HepG2 (cell line): ENCODE measurements at regions of chr7 and their contacts with region 1.

Region 1: DNA sequence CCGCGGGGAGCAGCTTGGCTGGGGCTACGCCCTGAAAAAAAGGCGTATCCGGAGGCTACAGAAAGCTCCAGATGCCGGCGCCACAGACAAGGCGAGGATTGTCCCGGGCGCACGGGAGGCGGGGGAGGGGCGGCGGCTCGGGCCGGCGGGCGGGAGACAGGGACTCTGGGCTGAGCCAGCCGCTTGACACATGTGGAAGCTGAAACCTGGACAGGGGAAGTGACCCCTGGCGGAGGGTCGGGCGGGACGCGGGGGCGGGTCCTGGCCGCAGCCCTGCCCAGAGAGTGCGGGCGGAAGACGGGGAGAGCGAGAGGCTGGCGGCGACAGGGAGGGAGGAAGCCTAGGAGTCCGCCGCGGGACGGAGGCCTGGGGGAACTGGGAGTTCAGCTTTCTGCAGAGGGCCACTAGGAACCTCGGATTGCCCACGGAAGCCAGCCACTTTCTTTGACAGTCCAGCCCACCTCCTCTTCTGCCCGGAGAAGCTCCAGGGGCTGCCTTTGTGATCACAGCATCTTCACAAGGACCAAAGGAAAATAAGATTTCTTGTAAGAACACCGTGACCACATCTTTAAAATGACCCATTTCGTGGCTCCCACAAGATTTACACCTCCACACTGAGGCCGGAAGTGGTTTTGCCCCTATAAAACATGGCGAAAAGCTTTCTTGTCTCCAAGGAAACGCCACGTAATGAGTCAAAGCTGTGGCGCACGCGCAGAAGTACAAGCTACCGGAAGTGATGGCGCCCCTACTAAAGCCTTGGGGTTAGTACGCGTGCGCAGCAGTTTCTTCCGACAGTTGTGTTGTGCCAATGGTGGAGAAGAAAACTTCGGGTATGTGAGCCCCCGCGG is at the starts of genes PLOD3 and ZNHIT1:
- DNase-seq: peak; percentile 98
- ATAC-seq: peak; percentile 93
- H3K4me3 ChIP-seq: peak within 1 kb of the TSS; percentile 82 to 95 (median 83)
- H3K27ac ChIP-seq: peak within 1 kb of the TSS; percentile 84
- H3K4me1 ChIP-seq: peaks cover 44% of the 10 kb centered on the region
- H3K27me3 ChIP-seq: no peaks in the 10 kb centered on the region; a peak in 1 of 5 replicates
- CTCF ChIP-seq: peak; percentile 66
- EP300 ChIP-seq: no peak
- POLR2A ChIP-seq: peak; percentile 46 to 73; a peak in 3 of 4 replicates
- RAD21 ChIP-seq: 0 out of 2 replicates have a peak, but pooled peaks have one; percentile 24
- total RNA-seq, gene PLOD3: 22.2 and 67.4 TPM in 2 replicates
- total RNA-seq, gene ZNHIT1: 64.5 and 66.5 TPM in 2 replicates

Region 2: DNA sequence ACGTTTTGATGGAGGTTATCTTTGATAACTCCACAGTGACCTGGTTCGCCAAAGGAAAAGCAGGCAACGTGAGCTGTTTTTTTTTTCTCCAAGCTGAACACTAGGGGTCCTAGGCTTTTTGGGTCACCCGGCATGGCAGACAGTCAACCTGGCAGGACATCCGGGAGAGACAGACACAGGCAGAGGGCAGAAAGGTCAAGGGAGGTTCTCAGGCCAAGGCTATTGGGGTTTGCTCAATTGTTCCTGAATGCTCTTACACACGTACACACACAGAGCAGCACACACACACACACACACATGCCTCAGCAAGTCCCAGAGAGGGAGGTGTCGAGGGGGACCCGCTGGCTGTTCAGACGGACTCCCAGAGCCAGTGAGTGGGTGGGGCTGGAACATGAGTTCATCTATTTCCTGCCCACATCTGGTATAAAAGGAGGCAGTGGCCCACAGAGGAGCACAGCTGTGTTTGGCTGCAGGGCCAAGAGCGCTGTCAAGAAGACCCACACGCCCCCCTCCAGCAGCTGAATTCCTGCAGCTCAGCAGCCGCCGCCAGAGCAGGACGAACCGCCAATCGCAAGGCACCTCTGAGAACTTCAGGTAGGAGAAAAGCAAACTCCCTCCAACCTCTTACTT is 90.8 kb before region 1 on chr7 and contains the start of gene SERPINE1:
- CTCF ChIA-PET with region 1: no interaction called
- POLR2A ChIA-PET with region 1: interaction called, 17 read pairs
- in situ Hi-C with region 1: no loop called
- intact Hi-C with region 1: no loop called
- DNase-seq: peak; percentile 98
- ATAC-seq: peak; percentile 77
- H3K4me3 ChIP-seq: peak within 1 kb of the TSS; percentile 74 to 82 (median 76)
- H3K27ac ChIP-seq: peak within 1 kb of the TSS; percentile 99
- H3K4me1 ChIP-seq: peaks cover 89% of the 10 kb centered on the region
- H3K27me3 ChIP-seq: no peaks in the 10 kb centered on the region; a peak in 1 of 5 replicates
- CTCF ChIP-seq: peak; percentile 61
- EP300 ChIP-seq: peak; percentile 71 to 80; a peak in 3 of 4 replicates
- POLR2A ChIP-seq: peak; percentile 99
- RAD21 ChIP-seq: peak; percentile 26; the same call in 1 of the 2 replicates
- total RNA-seq, gene SERPINE1: 9.2 and 21.2 TPM in 2 replicates

Region 3: GRCh38 chr7:101195884-101196283 is 21.7 kb before region 1 on chr7:
- CTCF ChIA-PET with region 1: no interaction called
- POLR2A ChIA-PET with region 1: interaction called, 202 read pairs
- in situ Hi-C with region 1: no loop called
- intact Hi-C with region 1: loop called (anchors 2 kb)
- DNase-seq: no peak
- ATAC-seq: no peak
- H3K4me3 ChIP-seq: no peak overlapping the region
- H3K27ac ChIP-seq: no peak overlapping the region
- H3K4me1 ChIP-seq: peaks cover 51% of the 10 kb centered on the region
- H3K27me3 ChIP-seq: no peaks in the 10 kb centered on the region; a peak in 1 of 5 replicates
- CTCF ChIP-seq: no peak
- EP300 ChIP-seq: no peak
- POLR2A ChIP-seq: peak in 1 of 2 experiments; percentile 41; a peak in 1 of 4 replicates
- RAD21 ChIP-seq: no peak

Region 4: GRCh38 chr7:101201695-101202604 is 15.7 kb before region 1 on chr7:
- CTCF ChIA-PET with region 1: no interaction called
- POLR2A ChIA-PET with region 1: interaction called, 202 read pairs
- in situ Hi-C with region 1: no loop called
- intact Hi-C with region 1: loop called (anchors 2 kb)
- DNase-seq: peak; percentile 48
- ATAC-seq: peak; percentile 77
- H3K4me3 ChIP-seq: peak overlapping the region; percentile 74 to 87 (median 84)
- H3K27ac ChIP-seq: peak overlapping the region; percentile 99
- H3K4me1 ChIP-seq: peaks cover 43% of the 10 kb centered on the region
- H3K27me3 ChIP-seq: no peaks in the 10 kb centered on the region; a peak in 1 of 5 replicates
- CTCF ChIP-seq: no peak; the same call in 1 of the 2 replicates
- EP300 ChIP-seq: 0 out of 4 replicates have a peak, but pooled peaks of 1 of the 2 experiments have one; percentile 7
- POLR2A ChIP-seq: peak; percentile 66 to 71; a peak in 3 of 4 replicates
- RAD21 ChIP-seq: 0 out of 2 replicates have a peak, but pooled peaks have one; percentile 31

Region 5: DNA sequence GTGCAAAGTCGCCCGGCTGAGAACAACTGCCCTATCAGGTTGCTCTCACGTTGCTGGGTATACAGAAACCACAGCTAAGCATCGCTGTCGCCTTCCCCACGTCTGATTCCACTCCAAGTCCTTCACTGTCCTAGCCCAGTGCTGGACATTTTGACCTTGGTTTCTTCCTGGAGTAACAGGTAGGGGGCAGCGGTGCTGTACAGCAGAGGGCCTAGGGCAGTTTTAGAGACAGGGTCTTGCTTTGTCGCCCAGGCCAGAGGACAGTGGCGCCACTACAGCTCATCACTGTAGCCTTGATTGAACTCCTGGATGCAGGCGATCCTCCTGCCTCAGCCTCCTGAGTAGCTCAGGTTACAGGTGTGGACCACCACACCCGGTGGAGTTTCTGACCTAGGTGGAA is 17.4 kb after region 1 on chr7:
- CTCF ChIA-PET with region 1: no interaction called
- POLR2A ChIA-PET with region 1: interaction called, 33 read pairs
- in situ Hi-C with region 1: no loop called
- intact Hi-C with region 1: no loop called
- DNase-seq: peak; percentile 29
- ATAC-seq: peak; percentile 12
- H3K4me3 ChIP-seq: no peak overlapping the region
- H3K27ac ChIP-seq: no peak overlapping the region
- H3K4me1 ChIP-seq: peaks cover 65% of the 10 kb centered on the region
- H3K27me3 ChIP-seq: no peaks in the 10 kb centered on the region
- CTCF ChIP-seq: peak; percentile 62
- EP300 ChIP-seq: no peak
- POLR2A ChIP-seq: 0 out of 4 replicates have a peak, but pooled peaks of 1 of the 2 experiments have one; percentile 42
- RAD21 ChIP-seq: peak; percentile 62

Region 6: DNA sequence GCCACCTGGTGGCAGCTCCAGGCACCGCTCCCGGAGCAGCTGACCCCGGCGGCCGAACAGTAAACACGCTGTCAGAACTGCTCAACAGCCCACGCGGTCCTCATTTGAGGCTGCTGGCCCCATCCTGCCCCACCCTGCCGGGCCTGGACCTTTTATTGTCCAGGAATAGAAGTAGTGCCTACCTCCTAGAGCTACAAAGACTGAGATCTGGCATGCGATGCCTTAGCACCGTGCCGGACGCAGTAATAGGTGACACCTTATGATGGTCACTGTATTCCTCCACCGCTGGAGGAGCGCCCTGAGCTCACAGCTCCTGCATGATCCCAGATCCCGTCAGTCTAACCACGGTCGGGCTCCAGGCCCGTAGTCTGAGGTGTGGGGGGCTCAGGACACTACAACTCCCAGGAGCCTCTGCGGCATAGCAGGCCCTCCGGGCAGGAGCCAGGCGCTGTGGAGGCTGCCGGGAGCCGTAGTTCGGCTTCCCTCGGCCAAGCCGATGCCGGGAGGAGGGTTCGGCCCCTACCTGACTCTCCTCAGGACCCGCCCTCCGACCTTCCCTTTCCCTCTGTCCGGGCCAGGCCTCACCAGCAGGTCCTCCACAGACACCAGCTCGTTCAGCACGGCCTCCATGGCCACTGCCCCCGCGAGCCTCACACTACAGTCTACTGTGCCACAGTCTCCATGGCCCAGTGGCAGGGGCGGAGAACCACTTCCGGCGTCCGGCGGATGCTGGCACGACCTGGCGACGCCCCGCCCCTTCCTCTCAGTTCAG is 26.9 kb after region 1 on chr7 and contains the start of gene FIS1:
- CTCF ChIA-PET with region 1: interaction called, 5 read pairs
- POLR2A ChIA-PET with region 1: interaction called, 71 read pairs
- in situ Hi-C with region 1: no loop called
- intact Hi-C with region 1: loop called (anchors 1 kb)
- DNase-seq: peak; percentile 81
- ATAC-seq: peak; percentile 96
- H3K4me3 ChIP-seq: peak within 1 kb of the TSS; percentile 79 to 90 (median 82)
- H3K27ac ChIP-seq: peak within 1 kb of the TSS; percentile 76
- H3K4me1 ChIP-seq: peaks cover 32% of the 10 kb centered on the region
- H3K27me3 ChIP-seq: no peaks in the 10 kb centered on the region
- CTCF ChIP-seq: peak; percentile 96
- EP300 ChIP-seq: no peak
- POLR2A ChIP-seq: peak; percentile 55 to 81; a peak in 3 of 4 replicates
- RAD21 ChIP-seq: peak; percentile 93
- total RNA-seq, gene FIS1: 97.5 and 122 TPM in 2 replicates

Region 7: DNA sequence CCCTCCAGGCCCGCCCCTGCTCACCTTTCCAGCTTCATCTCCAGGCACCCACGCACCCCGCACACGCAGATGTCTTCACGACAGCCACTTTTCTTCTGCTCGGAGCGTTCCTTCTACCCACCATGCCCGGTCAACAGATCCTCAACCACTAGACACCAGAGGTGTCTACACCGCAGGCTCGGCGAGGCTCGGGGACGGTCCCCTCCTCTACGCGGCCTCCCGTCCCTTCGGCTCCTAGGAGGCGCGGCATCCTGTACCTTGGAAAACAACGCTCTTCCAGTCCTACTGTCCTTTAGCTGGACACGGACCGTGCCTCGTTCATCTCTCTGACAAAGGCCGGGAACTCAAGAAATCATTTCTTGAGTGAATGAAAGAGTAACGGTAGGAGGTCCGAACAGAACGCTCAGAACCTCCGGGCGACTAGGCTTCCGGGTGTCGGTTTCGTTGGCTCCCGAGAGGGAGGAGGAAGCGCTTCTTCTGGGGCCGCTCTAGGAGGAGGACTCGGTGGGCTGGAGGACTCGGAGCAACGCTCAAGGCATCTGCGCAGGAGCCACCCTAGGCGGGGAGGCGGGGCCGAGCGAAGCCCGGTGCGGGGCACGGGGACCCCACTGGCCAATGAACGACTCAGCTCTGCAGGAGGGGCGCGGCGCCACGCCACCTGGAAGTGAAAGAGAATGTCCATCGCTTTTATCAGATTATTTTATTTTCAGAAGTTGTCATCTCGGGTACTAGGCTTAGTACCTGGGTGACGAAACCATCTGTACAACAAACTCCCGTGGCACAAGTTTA is 34.5 kb after region 1 on chr7:
- CTCF ChIA-PET with region 1: no interaction called
- POLR2A ChIA-PET with region 1: interaction called, 25 read pairs
- in situ Hi-C with region 1: no loop called
- intact Hi-C with region 1: no loop called
- DNase-seq: peak; percentile 95
- ATAC-seq: peak; percentile 99
- H3K4me3 ChIP-seq: peak overlapping the region; percentile 86 to 99 (median 98)
- H3K27ac ChIP-seq: peak overlapping the region; percentile 76
- H3K4me1 ChIP-seq: peaks cover 14% of the 10 kb centered on the region
- H3K27me3 ChIP-seq: no peaks in the 10 kb centered on the region; a peak in 2 of 5 replicates
- CTCF ChIP-seq: no peak
- EP300 ChIP-seq: no peak
- POLR2A ChIP-seq: peak; percentile 73 to 82
- RAD21 ChIP-seq: no peak

Region 8: GRCh38 chr7:101362334-101363195 is 145.0 kb after region 1 on chr7 and contains the start of gene COL26A1:
- CTCF ChIA-PET with region 1: no interaction called
- POLR2A ChIA-PET with region 1: no interaction called
- in situ Hi-C with region 1: no loop called
- intact Hi-C with region 1: no loop called
- DNase-seq: no peak
- ATAC-seq: peak; percentile 89
- H3K4me3 ChIP-seq: peak within 1 kb of the TSS; percentile 60 to 84 (median 75); a peak in 5 of 6 replicates
- H3K27ac ChIP-seq: peak within 1 kb of the TSS; percentile 66
- H3K4me1 ChIP-seq: peaks cover 24% of the 10 kb centered on the region
- H3K27me3 ChIP-seq: peaks cover 1 to 5% of the 10 kb centered on the region in 2 experiments; a peak in 3 of 5 replicates
- CTCF ChIP-seq: no peak
- EP300 ChIP-seq: no peak
- POLR2A ChIP-seq: no peak
- RAD21 ChIP-seq: no peak
- total RNA-seq, gene COL26A1: 3.9 and 9.2 TPM in 2 replicates